Activated T-helper 2 cell treated with anti-CD3 and anti-CD28 coated beads, Interferon-gamma antibody, Interleukin-2, Interleukin-4, amounts not matched to agents 10 μg/mL and 5 μg/mL and 100 μg/mL, durations not matched to agents 14 hours and 24 hours and 36 hours (primary cell): ENCODE measurements at regions of chr12 and their contacts with region 1.

Region 1: GRCh38 chr12:46303039-46303666 is 34.3 kb upstream of the SLC38A1 start:
- DNase-seq: peak; percentile 12
- H3K4me3 Mint-ChIP-seq: no peak overlapping the region
- H3K27ac Mint-ChIP-seq: no peak overlapping the region
- H3K4me1 Mint-ChIP-seq: peaks cover 4% of the 10 kb centered on the region
- H3K27me3 Mint-ChIP-seq: peaks cover 17% of the 10 kb centered on the region

Region 2: GRCh38 chr12:46124848-46125619 is 178.1 kb before region 1 on chr12:
- intact Hi-C with region 1: loop called (anchors 2 kb)
- DNase-seq: peak; percentile 33
- H3K4me3 Mint-ChIP-seq: no peak overlapping the region
- H3K27ac Mint-ChIP-seq: no peak overlapping the region
- H3K4me1 Mint-ChIP-seq: peaks cover 3% of the 10 kb centered on the region
- H3K27me3 Mint-ChIP-seq: peaks cover 44% of the 10 kb centered on the region

Region 3: DNA sequence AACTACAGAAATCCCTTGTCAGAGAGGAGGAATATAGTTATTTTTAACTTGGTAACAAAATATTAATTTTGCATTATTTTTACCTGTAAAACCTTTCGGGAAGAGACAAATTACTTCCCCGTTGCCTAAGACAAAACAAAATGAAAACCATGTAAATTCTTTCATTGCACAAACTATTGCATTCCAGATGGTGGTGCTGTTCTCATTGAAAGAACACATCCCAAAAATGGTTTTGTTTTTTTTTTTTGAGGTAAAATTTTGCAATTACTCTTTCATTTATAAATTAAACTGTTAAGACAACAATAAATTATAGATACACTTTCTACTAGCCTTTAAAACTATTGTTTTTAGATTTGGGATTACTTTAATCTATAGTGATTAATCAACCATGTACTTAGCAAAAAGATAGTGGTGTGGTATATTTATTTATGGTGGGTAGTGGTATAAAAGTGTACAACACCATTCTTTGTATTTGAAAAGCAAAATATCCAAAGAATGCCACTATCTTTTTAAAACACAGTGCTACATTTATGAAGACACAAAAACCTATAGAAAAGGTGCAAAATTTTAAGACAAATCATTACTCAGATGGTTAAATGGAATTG is 149.8 kb before region 1 on chr12:
- intact Hi-C with region 1: loop called (anchors 1 kb)
- DNase-seq: no peak
- H3K4me3 Mint-ChIP-seq: no peak overlapping the region
- H3K27ac Mint-ChIP-seq: no peak overlapping the region
- H3K4me1 Mint-ChIP-seq: peaks cover 2% of the 10 kb centered on the region
- H3K27me3 Mint-ChIP-seq: peaks cover 22% of the 10 kb centered on the region